HEK293 (cell line): ENCODE measurements at regions of chr4 and their contacts with region 1.

Region 1: GRCh38 chr4:128528793-128529553 is 241.4 kb upstream of the PGRMC2 start:
- H3K4me3 ChIP-seq: no peak overlapping the region
- H3K27ac ChIP-seq: no peak overlapping the region
- H3K4me1 ChIP-seq: no peaks in the 10 kb centered on the region
- CTCF ChIP-seq: no peak

Region 2: GRCh38 chr4:128379860-128380259 is 149.1 kb before region 1 on chr4:
- CTCF ChIA-PET with region 1: no interaction called
- POLR2A ChIA-PET with region 1: no interaction called
- H3K4me3 ChIP-seq: no peak overlapping the region
- H3K27ac ChIP-seq: no peak overlapping the region
- H3K4me1 ChIP-seq: no peaks in the 10 kb centered on the region
- CTCF ChIP-seq: no peak

Region 3: GRCh38 chr4:128542041-128542440 is 13.1 kb after region 1 on chr4:
- CTCF ChIA-PET with region 1: no interaction called
- POLR2A ChIA-PET with region 1: no interaction called
- H3K4me3 ChIP-seq: no peak overlapping the region
- H3K27ac ChIP-seq: no peak overlapping the region
- H3K4me1 ChIP-seq: no peaks in the 10 kb centered on the region
- CTCF ChIP-seq: no peak

Region 4: GRCh38 chr4:128553686-128554515 is 24.9 kb after region 1 on chr4:
- CTCF ChIA-PET with region 1: no interaction called
- POLR2A ChIA-PET with region 1: interaction called, 11 read pairs
- H3K4me3 ChIP-seq: no peak overlapping the region
- H3K27ac ChIP-seq: peak overlapping the region; percentile 69
- H3K4me1 ChIP-seq: peaks cover 6% of the 10 kb centered on the region; the same call in 1 of the 2 replicates
- CTCF ChIP-seq: no peak

Region 5: DNA sequence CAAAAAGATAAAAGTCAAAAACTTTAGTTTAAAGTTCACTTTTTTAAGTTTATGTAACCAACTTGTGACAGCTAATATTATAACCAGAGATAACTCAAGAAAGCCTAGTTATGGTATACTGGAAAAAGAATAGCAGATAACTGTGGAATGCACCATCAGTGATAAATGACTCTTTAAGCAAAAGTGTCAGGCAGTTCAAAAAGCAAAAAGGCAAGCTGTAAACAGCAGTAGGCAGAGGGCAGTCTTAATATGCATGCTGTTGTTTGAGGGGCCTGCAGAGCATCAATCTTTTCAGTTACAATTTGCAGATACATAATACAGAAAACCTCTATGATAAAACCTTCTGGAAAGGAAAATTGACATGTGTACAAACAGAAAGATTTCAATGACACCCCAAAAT is 198.7 kb after region 1 on chr4:
- CTCF ChIA-PET with region 1: no interaction called
- POLR2A ChIA-PET with region 1: no interaction called
- H3K4me3 ChIP-seq: no peak overlapping the region
- H3K27ac ChIP-seq: no peak overlapping the region
- H3K4me1 ChIP-seq: no peaks in the 10 kb centered on the region
- CTCF ChIP-seq: no peak